ENCODE measurements at regions of chr3 and their contacts with region 1.

Region 1: DNA sequence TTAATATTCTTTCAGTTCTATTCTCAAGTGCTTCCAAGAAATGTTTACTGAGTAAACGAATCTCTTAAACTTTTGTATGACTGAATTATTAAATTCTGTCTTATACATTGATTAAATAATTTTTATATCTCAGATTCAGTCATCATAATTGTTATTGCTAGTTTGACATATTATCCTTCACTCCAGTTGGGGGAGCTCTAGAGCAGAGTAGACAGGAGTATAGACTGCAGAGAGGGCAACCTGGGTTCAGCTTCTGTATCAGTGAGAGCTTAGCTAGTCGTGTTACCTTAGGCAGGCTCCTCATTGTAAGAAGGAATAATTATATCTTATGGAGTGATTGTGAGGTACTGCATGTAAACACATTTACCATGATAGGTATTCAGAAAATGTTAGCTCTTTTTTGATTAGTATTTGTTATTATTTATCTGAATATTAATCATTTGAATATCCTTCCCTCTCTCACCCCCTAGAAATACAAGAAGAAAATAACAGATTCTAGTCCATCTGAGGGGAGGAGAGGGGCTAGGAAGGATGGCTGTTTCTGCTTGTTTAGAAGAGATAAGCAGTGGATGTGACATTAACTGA is 31.0 kb upstream of the ZCWPW2 start:
- DNase-seq: peak; percentile 9
- CTCF ChIP-seq: peak; percentile 47

Region 2: GRCh38 chr3:27467545-27467944 is 850.0 kb before region 1 on chr3:
- in situ Hi-C with region 1: loop called (anchors 25 kb)
- DNase-seq: peak; percentile 62
- CTCF ChIP-seq: peak; percentile 44

Region 3: DNA sequence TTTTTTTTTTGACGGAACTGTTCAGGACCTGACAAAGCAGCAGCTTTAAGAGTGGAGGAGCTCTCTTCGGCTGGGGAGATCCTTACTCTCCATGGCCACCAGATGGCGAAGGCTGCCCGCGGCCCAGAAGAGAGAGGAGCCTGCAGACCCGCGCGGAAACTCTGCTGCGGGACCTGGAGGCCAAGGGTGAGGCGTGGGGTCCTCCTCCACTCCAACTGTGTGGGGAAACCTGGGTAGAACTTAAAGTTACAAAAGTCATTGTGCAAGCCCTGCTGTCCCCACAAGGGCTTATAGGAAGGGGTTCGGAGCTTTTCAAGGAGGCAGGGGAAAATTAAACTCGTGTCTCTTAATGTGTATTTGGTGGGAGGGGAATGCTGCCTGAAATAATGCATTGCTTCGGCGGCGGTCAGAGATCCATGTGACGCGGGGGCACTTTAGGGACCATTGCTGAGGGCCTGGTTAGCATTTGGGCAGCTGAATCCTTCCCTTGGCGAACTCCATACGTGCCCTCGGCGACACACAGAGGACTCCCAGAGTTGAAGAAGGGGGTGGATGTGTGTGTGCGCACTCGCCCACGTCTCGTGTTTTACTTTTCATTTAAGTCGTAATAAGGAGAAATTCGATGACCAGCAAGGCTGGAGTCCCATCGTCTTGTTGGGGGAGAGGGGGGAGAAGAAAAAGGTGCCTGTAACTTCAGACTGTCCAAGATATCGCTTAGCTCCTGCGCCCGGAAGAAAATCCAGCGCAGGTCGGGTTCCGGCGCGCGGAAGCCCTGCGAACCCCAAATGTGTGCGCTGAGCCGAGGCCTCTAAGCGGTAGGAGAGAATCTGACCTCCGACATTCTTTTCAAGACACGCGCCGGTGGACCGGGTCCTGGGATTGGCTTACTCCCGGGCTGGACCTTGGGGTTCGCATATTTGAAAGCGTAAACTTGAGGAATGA is 605.1 kb before region 1 on chr3:
- in situ Hi-C with region 1: loop called (anchors 25 kb)
- DNase-seq: peak; percentile 86
- CTCF ChIP-seq: peak; percentile 75

Measured in GM13976 (cell line).